Activated CD4-positive, alpha-beta memory T cell treated with anti-CD3 and anti-CD28 coated beads, Interleukin-2, amount 10 ng/mL, durations not matched to agents 7 days and 5 days (primary cell): ENCODE measurements at regions of chr7 and their contacts with region 1.

Region 1: DNA sequence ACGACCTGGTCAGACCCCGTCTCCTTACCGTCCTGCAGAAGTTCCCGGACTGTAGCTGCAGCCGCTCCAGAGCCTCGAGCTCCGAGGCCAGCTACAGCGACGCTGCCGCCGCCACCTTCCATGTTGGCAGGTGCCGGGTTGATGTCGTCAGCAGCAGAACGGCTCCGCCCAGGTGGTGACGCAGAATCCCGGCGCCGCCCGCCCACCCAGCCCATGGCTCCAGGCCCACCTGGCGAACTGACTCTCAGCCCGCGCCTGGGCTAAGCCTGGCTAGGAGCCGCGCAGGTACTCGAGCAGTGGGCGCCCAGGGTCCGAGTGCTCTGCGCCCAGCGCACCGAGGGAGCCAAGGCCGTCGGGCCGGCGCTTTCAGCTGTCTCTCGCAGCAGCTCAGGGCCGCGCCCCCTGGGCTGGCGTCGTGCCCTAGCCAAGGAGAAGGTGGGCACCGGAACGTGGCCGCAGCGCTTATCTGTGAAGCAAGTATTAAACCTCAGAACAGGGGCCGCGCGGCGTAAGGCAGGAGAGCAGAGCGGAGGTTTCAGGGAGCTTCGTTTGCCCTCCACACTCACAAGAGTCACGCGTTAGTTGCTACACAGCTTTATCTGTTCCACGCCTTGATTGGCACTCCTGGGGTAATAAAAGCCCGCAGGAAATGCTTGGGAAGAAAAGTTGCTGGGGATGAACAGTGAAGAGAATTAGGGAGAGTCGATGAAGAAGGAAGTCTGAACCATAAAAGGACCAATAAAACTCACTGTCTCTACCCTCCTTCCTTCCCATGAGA is at the starts of genes COG5 and DUS4L:
- DNase-seq: peak; percentile 88
- H3K4me3 Mint-ChIP-seq: peak within 1 kb of the TSS; percentile 74
- H3K27ac Mint-ChIP-seq: peak within 1 kb of the TSS; percentile 92
- H3K4me1 Mint-ChIP-seq: peaks cover 56% of the 10 kb centered on the region
- H3K27me3 Mint-ChIP-seq: no peaks in the 10 kb centered on the region
- total RNA-seq, gene COG5: 40.1 to 45.3 TPM
- total RNA-seq, gene DUS4L: 8.1 to 8.9 TPM

Region 2: DNA sequence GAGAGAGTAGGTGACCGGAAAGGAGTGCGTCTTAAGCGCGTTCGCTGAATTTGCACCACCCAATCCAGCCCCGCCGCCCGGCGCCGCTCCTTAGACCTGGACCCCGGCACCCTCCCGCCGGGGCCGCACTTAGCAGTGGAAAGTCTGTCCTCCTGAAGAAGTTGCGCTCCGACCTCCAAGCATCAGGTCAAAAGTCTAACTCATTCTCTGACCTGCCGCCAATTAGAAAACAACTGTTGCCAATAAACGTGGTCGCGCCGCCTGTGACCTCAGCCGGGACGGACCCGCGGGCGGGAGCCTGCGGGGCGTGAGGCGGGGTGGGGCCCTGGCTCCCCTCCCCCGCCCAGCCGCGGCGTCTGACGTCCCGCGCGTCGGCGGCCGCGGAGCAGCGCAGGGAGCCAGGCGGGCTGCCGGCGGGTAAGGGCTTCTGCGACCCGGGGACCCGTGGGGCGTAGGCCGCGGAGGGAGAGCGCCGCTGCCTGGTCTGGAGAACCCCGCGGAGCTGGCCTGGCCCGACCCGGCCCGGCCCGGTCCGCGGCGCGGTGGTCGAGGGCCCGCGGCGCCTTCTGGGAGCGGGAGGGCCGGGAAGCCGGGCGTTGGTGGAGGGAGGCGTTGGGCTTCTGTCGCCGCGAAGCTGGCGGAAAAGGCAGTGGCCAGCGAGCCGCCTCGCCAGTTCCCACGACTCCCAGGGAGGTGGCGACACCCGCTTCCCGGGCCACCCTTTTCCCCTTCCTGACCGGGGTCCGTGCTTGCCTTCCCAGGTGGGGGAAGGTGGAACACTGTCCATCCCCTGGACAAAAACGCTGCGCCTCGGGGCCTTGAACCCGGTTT is 16.1 kb after region 1 on chr7 and contains the start of gene BCAP29:
- CTCF ChIA-PET with region 1: interaction called, 11 read pairs
- POLR2A ChIA-PET with region 1: interaction called, 32 read pairs
- DNase-seq: peak; percentile 74
- H3K4me3 Mint-ChIP-seq: peak within 1 kb of the TSS; percentile 87
- H3K27ac Mint-ChIP-seq: peak within 1 kb of the TSS; percentile 82
- H3K4me1 Mint-ChIP-seq: peaks cover 32% of the 10 kb centered on the region
- H3K27me3 Mint-ChIP-seq: no peaks in the 10 kb centered on the region
- total RNA-seq, gene BCAP29: 49.1 to 52.5 TPM

Region 3: DNA sequence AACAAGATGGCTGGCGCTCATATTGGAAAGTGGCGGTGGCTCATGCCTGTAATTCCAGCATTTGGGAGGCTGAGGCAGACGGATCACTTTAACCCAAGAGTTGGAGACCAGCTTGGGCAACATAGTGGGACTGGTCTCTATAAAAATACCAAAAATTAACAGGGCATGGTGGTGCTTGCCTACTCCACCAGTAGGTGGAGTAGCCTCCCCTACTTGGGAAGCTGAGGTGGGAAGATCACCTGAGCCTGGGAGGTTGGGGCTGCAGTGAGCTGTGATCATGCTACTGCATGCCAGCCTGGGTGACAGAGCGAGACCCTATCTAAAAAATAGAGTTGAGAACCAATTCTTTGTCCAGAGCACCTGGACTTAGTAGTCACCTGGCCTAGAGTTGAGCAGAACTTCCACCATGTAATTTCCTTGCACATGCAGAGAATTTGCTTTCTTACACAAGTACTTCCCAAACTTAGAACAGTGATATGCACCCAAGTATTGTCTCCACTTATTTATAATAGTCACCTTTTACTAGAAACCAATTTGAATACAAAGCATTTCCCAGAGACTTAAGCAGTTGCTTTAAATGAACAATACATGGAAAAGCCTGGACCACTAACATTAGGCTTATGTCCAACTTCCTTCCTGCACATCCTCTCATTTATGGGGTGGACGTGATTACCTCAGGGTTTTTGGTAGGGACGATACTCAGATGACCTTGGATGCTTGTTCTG is 550.3 kb after region 1 on chr7:
- CTCF ChIA-PET with region 1: no interaction called
- POLR2A ChIA-PET with region 1: no interaction called
- DNase-seq: no peak
- H3K4me3 Mint-ChIP-seq: no peak overlapping the region
- H3K27ac Mint-ChIP-seq: no peak overlapping the region
- H3K4me1 Mint-ChIP-seq: no peaks in the 10 kb centered on the region
- H3K27me3 Mint-ChIP-seq: peaks cover 11% of the 10 kb centered on the region